Right lobe of liver (tissue), 6 donors: ENCODE measurements at regions of chr15 and their contacts with region 1.

Region 1: DNA sequence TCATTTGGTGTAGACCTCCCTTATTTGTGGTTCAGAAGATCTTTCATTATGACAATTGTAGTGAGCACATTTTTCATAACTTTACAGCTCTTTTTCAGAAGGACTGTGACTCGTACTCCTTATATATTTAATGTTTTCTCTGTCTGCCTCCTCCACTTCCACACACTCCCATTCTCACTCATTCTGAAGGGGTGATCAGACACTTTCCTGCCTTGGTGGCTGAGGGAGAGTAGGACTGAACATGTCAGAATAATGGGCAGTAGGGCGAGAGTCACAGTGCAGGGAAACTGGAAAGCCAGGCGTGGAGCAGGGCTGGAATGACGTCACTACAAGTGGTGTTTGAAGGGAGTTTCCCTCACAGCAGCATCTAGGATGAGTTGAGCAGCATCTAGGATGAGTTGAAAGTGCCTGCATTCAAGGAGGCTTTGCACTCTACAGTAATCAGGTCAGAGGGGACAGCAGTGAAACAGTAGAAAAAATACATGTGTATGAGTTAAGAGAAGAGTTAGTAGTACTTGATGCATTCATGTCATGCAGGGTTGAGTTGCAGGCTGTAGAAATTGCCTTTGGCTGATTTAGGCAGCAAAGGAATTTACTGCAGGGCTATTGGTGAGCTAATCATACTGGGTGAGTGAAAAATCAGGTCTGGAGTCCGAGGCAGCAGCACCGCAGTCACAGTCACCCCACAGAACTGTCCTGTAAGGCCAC is 36.3 kb upstream of the FBXL22 start:
- DNase-seq: no peak
- ATAC-seq: no peak
- H3K4me3 ChIP-seq: no peak overlapping the region
- H3K27ac ChIP-seq: no peak overlapping the region
- H3K4me1 ChIP-seq: no peaks in the 10 kb centered on the region
- H3K27me3 ChIP-seq: no peaks in the 10 kb centered on the region
- CTCF ChIP-seq: no peak
- POLR2A ChIP-seq: no peak

Region 2: GRCh38 chr15:63473999-63474809 is 86.7 kb before region 1 on chr15:
- intact Hi-C with region 1: no loop called
- DNase-seq: peak; percentile 65 to 88 (median 85)
- ATAC-seq: peak; percentile 82 to 87 (median 85)
- H3K4me3 ChIP-seq: no peak overlapping the region
- H3K27ac ChIP-seq: peak overlapping the region; percentile 69 to 83 (median 83)
- H3K4me1 ChIP-seq: peaks cover 2 to 41% (median 16%) of the 10 kb centered on the region in 4 donors
- H3K27me3 ChIP-seq: no peaks in the 10 kb centered on the region
- CTCF ChIP-seq: peak in 1 of 4 donors; percentile 5
- POLR2A ChIP-seq: no peak

Region 3: GRCh38 chr15:63514531-63514943 is 46.4 kb before region 1 on chr15:
- intact Hi-C with region 1: loop called in 1 of 2 experiments (anchors 10 kb)
- DNase-seq: no peak
- ATAC-seq: peak; percentile 30 to 68 (median 62)
- H3K4me3 ChIP-seq: peak overlapping the region in 1 of 3 donors; percentile 11
- H3K27ac ChIP-seq: no peak overlapping the region
- H3K4me1 ChIP-seq: peaks cover 0 to 55% (median 18%) of the 10 kb centered on the region in 4 donors
- H3K27me3 ChIP-seq: no peaks in the 10 kb centered on the region
- CTCF ChIP-seq: no peak
- POLR2A ChIP-seq: no peak